Endothelial cell of umbilical vein (primary cell): ENCODE measurements at regions of chr7 and their contacts with region 1.

Region 1: GRCh38 chr7:128135515-128136214 is 104.4 kb upstream of the LRRC4 start:
- DNase-seq: peak; percentile 64
- H3K4me3 ChIP-seq: peak overlapping the region; percentile 34 to 62 (median 58)
- H3K27ac ChIP-seq: no peak overlapping the region
- H3K4me1 ChIP-seq: peaks cover 37% of the 10 kb centered on the region
- H3K27me3 ChIP-seq: peaks cover 17 to 34% of the 10 kb centered on the region in 2 experiments
- CTCF ChIP-seq: peak; percentile 75 to 93
- POLR2A ChIP-seq: no peak

Region 2: GRCh38 chr7:127632280-127632791 is 503.3 kb before region 1 on chr7:
- CTCF ChIA-PET with region 1: no interaction called
- POLR2A ChIA-PET with region 1: no interaction called
- dilution Hi-C with region 1: no loop called
- intact Hi-C with region 1: no loop called
- DNase-seq: no peak
- H3K4me3 ChIP-seq: no peak overlapping the region
- H3K27ac ChIP-seq: no peak overlapping the region
- H3K4me1 ChIP-seq: no peaks in the 10 kb centered on the region
- H3K27me3 ChIP-seq: peaks cover 10 to 16% of the 10 kb centered on the region in 2 experiments
- CTCF ChIP-seq: no peak
- POLR2A ChIP-seq: no peak

Region 3: DNA sequence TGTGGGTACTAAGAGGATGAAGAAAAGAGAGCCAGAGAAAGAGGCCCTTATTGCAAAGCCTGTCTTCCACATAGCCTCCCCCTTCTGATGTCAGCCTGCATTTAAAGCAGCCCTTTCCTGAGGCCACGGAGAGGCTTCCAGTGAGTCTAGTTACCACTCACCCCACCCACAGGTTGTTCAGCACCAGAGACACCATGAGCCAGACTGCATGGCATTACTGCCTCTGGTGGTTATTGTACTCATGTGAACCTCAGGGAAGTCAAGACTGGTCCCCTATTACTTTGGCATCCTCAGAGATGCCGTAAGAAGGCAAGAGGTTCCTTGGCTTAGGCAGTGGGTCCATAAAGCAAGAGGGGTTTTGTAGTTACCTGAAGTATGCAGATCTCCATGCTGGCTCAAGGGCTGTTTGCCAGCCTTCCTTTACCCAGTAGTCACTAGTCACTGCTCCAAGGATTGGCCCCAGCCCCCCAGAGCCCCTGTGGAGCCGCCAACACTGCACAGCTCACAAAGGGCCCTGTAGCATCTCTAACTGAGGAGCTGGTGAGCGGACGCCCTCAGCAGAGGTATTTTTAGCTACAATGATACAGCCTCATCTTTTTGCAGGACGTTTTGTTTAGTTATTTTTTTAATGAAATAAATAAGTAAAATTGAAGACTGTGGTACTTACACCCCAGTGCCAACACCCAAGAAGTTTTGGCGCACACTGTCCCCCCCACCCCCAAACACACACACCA is 125.1 kb before region 1 on chr7:
- CTCF ChIA-PET with region 1: no interaction called
- POLR2A ChIA-PET with region 1: no interaction called
- dilution Hi-C with region 1: no loop called
- intact Hi-C with region 1: no loop called
- DNase-seq: no peak
- H3K4me3 ChIP-seq: no peak overlapping the region
- H3K27ac ChIP-seq: no peak overlapping the region
- H3K4me1 ChIP-seq: no peaks in the 10 kb centered on the region
- H3K27me3 ChIP-seq: no peaks in the 10 kb centered on the region
- CTCF ChIP-seq: no peak
- POLR2A ChIP-seq: no peak

Region 4: GRCh38 chr7:128031901-128032604 is 103.6 kb before region 1 on chr7:
- CTCF ChIA-PET with region 1: interaction called, 11 read pairs
- POLR2A ChIA-PET with region 1: no interaction called
- dilution Hi-C with region 1: no loop called
- intact Hi-C with region 1: loop called (anchors 5 kb)
- DNase-seq: peak; percentile 85
- H3K4me3 ChIP-seq: peak overlapping the region in 2 of 3 experiments; percentile 8 to 45
- H3K27ac ChIP-seq: no peak overlapping the region
- H3K4me1 ChIP-seq: peaks cover 6% of the 10 kb centered on the region
- H3K27me3 ChIP-seq: no peaks in the 10 kb centered on the region
- CTCF ChIP-seq: peak; percentile 16 to 37
- POLR2A ChIP-seq: no peak

Region 5: DNA sequence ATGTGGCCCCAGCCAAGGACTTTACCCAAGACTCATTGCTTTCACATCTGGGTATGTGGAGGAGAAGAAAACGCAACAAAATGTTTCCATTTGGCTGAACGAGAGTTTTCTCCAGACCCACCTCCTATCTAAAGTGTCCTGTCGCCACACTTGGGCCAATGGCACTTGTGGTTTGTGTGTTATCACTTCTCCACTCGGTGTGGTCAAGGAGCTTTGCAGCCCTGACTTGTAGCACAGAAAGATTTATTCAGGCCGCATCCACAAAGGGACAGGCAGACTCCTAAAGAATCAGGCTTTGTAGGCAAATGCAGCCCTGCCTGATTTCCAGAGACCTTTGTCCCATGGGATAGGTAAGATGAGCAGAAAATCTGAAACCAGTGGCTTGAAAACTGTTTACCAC is 91.6 kb before region 1 on chr7:
- CTCF ChIA-PET with region 1: no interaction called
- POLR2A ChIA-PET with region 1: no interaction called
- dilution Hi-C with region 1: no loop called
- intact Hi-C with region 1: no loop called
- DNase-seq: no peak
- H3K4me3 ChIP-seq: no peak overlapping the region
- H3K27ac ChIP-seq: no peak overlapping the region
- H3K4me1 ChIP-seq: peaks cover 25% of the 10 kb centered on the region
- H3K27me3 ChIP-seq: no peaks in the 10 kb centered on the region
- CTCF ChIP-seq: no peak
- POLR2A ChIP-seq: no peak

Region 6: DNA sequence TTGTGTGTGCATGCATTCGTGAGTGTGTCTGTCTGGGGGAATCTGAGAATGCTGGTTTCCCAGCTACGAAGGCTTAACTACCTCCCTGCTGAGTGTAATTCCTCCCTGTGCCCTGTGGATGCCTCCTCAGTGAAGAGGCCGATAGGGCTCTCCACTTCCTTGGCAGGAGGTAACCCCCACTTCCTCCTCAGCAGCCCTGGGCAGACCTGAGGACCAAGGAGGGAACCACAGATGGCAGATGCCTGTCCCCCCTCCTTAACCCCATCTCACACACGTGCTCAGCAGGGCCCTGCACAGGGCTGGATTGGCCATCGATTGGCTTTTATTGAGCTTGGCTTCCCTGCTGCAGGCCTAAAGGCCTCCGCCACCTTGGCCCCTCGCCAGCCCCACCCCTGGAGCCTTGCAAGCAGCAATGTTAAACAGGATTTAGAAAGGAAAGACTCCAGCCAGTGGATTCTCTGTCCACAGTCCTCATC is 58.8 kb before region 1 on chr7:
- CTCF ChIA-PET with region 1: interaction called, 10 read pairs
- POLR2A ChIA-PET with region 1: no interaction called
- dilution Hi-C with region 1: no loop called
- intact Hi-C with region 1: no loop called
- DNase-seq: no peak
- H3K4me3 ChIP-seq: no peak overlapping the region
- H3K27ac ChIP-seq: no peak overlapping the region
- H3K4me1 ChIP-seq: peaks cover 18% of the 10 kb centered on the region
- H3K27me3 ChIP-seq: no peaks in the 10 kb centered on the region
- CTCF ChIP-seq: no peak
- POLR2A ChIP-seq: no peak

Region 7: GRCh38 chr7:128104035-128104742 is 31.5 kb before region 1 on chr7:
- CTCF ChIA-PET with region 1: interaction called, 26 read pairs
- POLR2A ChIA-PET with region 1: no interaction called
- dilution Hi-C with region 1: no loop called
- intact Hi-C with region 1: no loop called
- DNase-seq: no peak
- H3K4me3 ChIP-seq: peak overlapping the region in 1 of 3 experiments; percentile 18
- H3K27ac ChIP-seq: no peak overlapping the region
- H3K4me1 ChIP-seq: peaks cover 6% of the 10 kb centered on the region
- H3K27me3 ChIP-seq: peaks cover 10 to 25% of the 10 kb centered on the region in 2 experiments
- CTCF ChIP-seq: no peak
- POLR2A ChIP-seq: no peak

Region 8: DNA sequence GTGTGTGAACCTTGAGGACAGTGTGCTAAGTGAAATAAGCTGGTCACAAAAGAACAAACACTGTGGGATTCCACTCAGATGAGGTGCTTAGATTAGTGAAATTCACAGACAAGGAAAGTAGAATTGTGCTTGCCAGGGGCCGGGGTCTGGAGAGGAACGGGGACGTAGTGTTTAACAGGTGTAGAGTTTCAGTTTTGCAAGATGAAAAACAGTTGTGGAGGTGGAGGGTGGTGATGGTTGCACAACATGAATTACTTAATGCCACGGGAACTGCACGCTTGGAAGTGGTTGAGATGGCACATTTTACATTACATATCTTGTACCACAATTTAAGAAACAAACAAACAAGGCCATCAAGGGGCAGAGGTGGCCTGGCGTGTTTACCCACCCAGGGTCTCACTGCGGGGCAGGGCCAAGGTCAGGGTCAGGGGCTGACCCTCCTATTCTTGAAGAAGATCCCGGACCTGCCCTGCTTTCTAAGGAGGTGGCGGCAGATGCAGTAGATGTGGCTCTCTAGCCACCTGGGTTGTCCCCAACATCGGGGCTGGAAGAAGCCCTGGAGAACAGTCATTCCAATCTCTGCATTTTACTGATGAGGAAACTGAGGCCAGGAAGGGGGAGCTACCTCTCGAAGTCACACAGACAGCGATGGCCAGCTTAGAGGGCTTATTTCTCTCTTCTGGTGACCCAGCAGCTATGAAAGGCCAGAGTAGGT is 12.9 kb before region 1 on chr7:
- CTCF ChIA-PET with region 1: interaction called, 12 read pairs
- POLR2A ChIA-PET with region 1: interaction called, 4 read pairs
- dilution Hi-C with region 1: no loop called
- intact Hi-C with region 1: no loop called
- DNase-seq: no peak
- H3K4me3 ChIP-seq: no peak overlapping the region
- H3K27ac ChIP-seq: no peak overlapping the region
- H3K4me1 ChIP-seq: no peaks in the 10 kb centered on the region
- H3K27me3 ChIP-seq: peaks cover 10 to 13% of the 10 kb centered on the region in 2 experiments
- CTCF ChIP-seq: no peak
- POLR2A ChIP-seq: no peak

Region 9: GRCh38 chr7:128155100-128155740 is 19.6 kb after region 1 on chr7:
- CTCF ChIA-PET with region 1: interaction called, 13 read pairs
- POLR2A ChIA-PET with region 1: no interaction called
- dilution Hi-C with region 1: no loop called
- intact Hi-C with region 1: no loop called
- DNase-seq: no peak
- H3K4me3 ChIP-seq: no peak overlapping the region
- H3K27ac ChIP-seq: no peak overlapping the region
- H3K4me1 ChIP-seq: no peaks in the 10 kb centered on the region
- H3K27me3 ChIP-seq: peaks cover 28 to 31% of the 10 kb centered on the region in 2 experiments
- CTCF ChIP-seq: no peak
- POLR2A ChIP-seq: no peak